CD4-positive, alpha-beta memory T cell (primary cell): ENCODE measurements at regions of chr5 and their contacts with region 1.

Region 1: DNA sequence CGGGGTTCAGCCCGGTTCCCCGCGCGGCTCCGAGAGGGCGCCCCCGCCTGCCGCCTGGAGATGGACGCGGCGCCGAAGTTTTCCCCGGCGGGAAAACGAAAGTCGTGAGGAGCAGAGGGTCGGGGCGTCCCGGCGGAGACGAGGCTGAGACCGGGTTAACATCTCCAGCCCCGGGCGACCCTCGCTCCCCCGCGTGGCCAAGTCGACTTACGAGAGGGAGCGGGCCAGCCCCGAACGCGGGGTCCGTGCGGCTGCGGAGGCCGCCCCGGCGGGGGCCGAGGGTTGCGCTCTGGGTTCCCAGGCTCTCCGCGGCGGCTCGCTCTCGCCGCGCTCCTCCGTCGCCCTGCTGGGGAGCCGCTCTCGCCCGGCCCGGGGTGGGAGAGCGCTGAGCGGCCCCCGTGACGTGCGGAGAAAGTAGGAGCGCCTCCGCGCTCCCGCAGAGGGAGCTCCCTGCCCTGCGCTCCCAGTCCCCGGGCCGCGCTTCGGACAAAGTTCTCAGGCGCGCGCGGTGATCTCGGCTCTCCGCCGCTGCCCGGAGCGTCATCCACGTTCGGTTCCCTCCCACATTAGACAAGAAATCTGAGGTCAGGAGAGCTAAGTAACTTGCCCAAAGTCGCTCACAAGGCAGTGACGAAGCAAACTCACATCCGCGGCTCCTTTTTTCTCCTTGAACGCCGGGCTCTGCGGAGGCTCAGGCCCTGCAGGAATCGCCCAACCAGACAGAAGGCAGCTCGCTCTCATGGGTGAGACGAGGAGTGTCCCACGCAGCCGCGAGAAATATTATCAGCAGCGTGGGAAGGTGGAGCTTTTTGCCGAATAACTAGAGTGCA is 1.2 kb upstream of the GCNT4 start:
- DNase-seq: peak; percentile 61 to 74 (median 73)
- H3K4me3 ChIP-seq: peak overlapping the region; percentile 43 to 74
- H3K4me3 Mint-ChIP-seq: peak overlapping the region; percentile 89 to 93 (median 92)
- H3K27ac ChIP-seq: peak overlapping the region; percentile 67
- H3K27ac Mint-ChIP-seq: peak overlapping the region; percentile 91 to 96 (median 93)
- H3K4me1 ChIP-seq: peaks cover 78% of the 10 kb centered on the region
- H3K4me1 Mint-ChIP-seq: peaks cover 46 to 85% (median 75%) of the 10 kb centered on the region in 4 donors
- H3K27me3 ChIP-seq: no peaks in the 10 kb centered on the region
- H3K27me3 Mint-ChIP-seq: peaks cover 0 to 3% of the 10 kb centered on the region in 2 donors

Region 2: GRCh38 chr5:73902327-73903051 is 1151.0 kb before region 1 on chr5:
- CTCF ChIA-PET with region 1: no interaction called
- POLR2A ChIA-PET with region 1: no interaction called
- intact Hi-C with region 1: loop called (anchors 10 kb)
- DNase-seq: peak in 4 of 5 donors; percentile 44 to 51 (median 48)
- H3K4me3 ChIP-seq: no peak overlapping the region
- H3K4me3 Mint-ChIP-seq: no peak overlapping the region
- H3K27ac ChIP-seq: no peak overlapping the region
- H3K27ac Mint-ChIP-seq: no peak overlapping the region
- H3K4me1 ChIP-seq: no peaks in the 10 kb centered on the region
- H3K4me1 Mint-ChIP-seq: no peaks in the 10 kb centered on the region
- H3K27me3 ChIP-seq: no peaks in the 10 kb centered on the region
- H3K27me3 Mint-ChIP-seq: peaks cover 15 to 28% of the 10 kb centered on the region in 2 donors

Region 3: DNA sequence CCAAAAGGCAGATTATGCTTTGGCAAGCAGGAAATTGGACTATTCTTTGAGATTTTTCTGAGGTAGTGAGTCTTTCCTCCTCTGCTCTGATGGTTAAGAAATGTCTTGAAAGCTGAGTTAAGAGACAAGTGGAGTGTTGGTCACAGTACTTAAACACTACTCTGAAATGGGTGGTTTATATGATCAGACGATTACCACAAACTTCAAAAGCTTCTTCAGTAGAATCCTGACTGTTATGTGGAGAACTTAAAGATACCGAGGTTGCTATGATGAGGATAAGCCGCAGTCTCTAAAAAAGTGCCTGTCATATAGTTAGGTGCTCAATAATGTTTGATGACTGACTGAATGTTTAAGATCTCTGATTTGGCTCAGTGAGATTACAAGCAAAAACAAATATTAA is 25.4 kb before region 1 on chr5:
- CTCF ChIA-PET with region 1: interaction called, 25 read pairs
- POLR2A ChIA-PET with region 1: interaction called, 3 read pairs
- intact Hi-C with region 1: no loop called
- DNase-seq: peak in 3 of 5 donors; percentile 9 to 39 (median 24)
- H3K4me3 ChIP-seq: no peak overlapping the region
- H3K4me3 Mint-ChIP-seq: peak overlapping the region in 2 of 8 donors; percentile 16 to 17
- H3K27ac ChIP-seq: no peak overlapping the region
- H3K27ac Mint-ChIP-seq: peak overlapping the region in 4 of 7 donors; percentile 49 to 63 (median 60)
- H3K4me1 ChIP-seq: peaks cover 28% of the 10 kb centered on the region
- H3K4me1 Mint-ChIP-seq: peaks cover 25 to 53% (median 46%) of the 10 kb centered on the region in 4 donors
- H3K27me3 ChIP-seq: no peaks in the 10 kb centered on the region
- H3K27me3 Mint-ChIP-seq: peaks cover 0 to 2% of the 10 kb centered on the region in 2 donors

Region 4: DNA sequence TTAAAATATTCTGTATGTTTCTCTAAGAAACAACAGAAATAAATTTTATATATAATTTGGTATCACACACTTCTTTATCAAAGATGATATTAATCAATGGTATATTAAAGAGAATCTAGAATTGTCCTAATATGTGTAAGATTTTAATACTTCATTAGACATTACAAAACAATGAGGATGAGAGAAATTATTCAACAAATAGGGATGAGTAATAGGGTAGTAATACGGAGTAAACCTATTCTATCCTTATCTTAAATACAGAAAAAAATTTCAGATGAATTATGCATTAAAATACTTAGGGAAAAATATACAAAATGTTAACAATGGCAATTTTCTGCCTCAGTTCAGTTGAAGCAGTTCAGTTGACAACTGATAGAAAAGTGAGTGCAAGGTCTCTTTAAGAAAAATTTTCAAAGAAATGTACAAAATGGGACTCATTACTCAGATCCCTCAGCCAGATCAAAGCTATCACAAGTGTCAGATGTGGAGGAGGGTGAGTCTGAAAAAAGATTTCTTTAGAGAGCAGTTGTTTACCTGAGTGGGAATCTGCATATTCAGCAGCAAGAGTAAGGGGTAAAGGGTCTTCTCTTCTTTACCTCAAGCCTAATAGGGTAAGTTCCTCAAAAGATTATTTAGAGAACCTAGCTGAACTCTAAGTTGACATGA is 55.5 kb after region 1 on chr5:
- CTCF ChIA-PET with region 1: interaction called, 11 read pairs
- POLR2A ChIA-PET with region 1: interaction called, 16 read pairs
- intact Hi-C with region 1: loop called (anchors 2 kb)
- DNase-seq: peak in 2 of 5 donors; percentile 6 to 13
- H3K4me3 ChIP-seq: no peak overlapping the region
- H3K4me3 Mint-ChIP-seq: peak overlapping the region in 1 of 8 donors; percentile 18
- H3K27ac ChIP-seq: no peak overlapping the region
- H3K27ac Mint-ChIP-seq: peak overlapping the region in 3 of 7 donors; percentile 6 to 44 (median 33)
- H3K4me1 ChIP-seq: peaks cover 8% of the 10 kb centered on the region
- H3K4me1 Mint-ChIP-seq: peaks cover 4 to 15% (median 9%) of the 10 kb centered on the region in 4 donors
- H3K27me3 ChIP-seq: no peaks in the 10 kb centered on the region
- H3K27me3 Mint-ChIP-seq: no peaks in the 10 kb centered on the region

Region 5: DNA sequence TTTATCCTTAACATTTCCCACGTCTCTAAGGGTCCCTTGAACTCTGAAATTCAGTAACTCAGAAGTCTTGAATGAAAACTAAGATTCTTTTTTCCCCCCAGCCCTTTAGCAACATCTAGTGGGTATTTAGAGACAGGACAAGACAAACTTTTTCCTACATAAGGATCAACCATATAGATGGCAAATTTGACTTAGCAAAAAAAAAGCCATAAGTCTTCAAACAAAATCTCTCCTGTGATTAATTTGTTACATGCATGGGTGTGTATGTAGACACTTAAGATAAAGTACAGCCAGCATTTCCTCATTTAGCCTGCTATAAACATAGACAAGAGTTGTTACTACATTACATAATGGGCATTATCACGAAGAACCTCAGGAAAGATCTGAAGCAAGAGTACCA is 212.2 kb after region 1 on chr5:
- CTCF ChIA-PET with region 1: interaction called, 22 read pairs
- POLR2A ChIA-PET with region 1: no interaction called
- intact Hi-C with region 1: loop called (anchors 1 kb)
- DNase-seq: peak in 4 of 5 donors; percentile 36 to 52 (median 38)
- H3K4me3 ChIP-seq: no peak overlapping the region
- H3K4me3 Mint-ChIP-seq: no peak overlapping the region
- H3K27ac ChIP-seq: no peak overlapping the region
- H3K27ac Mint-ChIP-seq: no peak overlapping the region
- H3K4me1 ChIP-seq: no peaks in the 10 kb centered on the region
- H3K4me1 Mint-ChIP-seq: peaks cover 0 to 2% (median under 1%) of the 10 kb centered on the region in 4 donors
- H3K27me3 ChIP-seq: no peaks in the 10 kb centered on the region
- H3K27me3 Mint-ChIP-seq: peaks cover 1 to 7% of the 10 kb centered on the region in 2 donors

Region 6: GRCh38 chr5:75681125-75681830 is 627.8 kb after region 1 on chr5:
- CTCF ChIA-PET with region 1: interaction called, 3 read pairs
- POLR2A ChIA-PET with region 1: no interaction called
- intact Hi-C with region 1: loop called (anchors 5 kb)
- DNase-seq: peak in 4 of 5 donors; percentile 26 to 39 (median 34)
- H3K4me3 ChIP-seq: no peak overlapping the region
- H3K4me3 Mint-ChIP-seq: no peak overlapping the region
- H3K27ac ChIP-seq: no peak overlapping the region
- H3K27ac Mint-ChIP-seq: peak overlapping the region in 1 of 7 donors; percentile 29
- H3K4me1 ChIP-seq: peaks cover 5% of the 10 kb centered on the region
- H3K4me1 Mint-ChIP-seq: peaks cover 5 to 11% (median 9%) of the 10 kb centered on the region in 4 donors
- H3K27me3 ChIP-seq: no peaks in the 10 kb centered on the region
- H3K27me3 Mint-ChIP-seq: no peaks in the 10 kb centered on the region